ENCODE measurements at regions of chr12 and their contacts with region 1.

Region 1: DNA sequence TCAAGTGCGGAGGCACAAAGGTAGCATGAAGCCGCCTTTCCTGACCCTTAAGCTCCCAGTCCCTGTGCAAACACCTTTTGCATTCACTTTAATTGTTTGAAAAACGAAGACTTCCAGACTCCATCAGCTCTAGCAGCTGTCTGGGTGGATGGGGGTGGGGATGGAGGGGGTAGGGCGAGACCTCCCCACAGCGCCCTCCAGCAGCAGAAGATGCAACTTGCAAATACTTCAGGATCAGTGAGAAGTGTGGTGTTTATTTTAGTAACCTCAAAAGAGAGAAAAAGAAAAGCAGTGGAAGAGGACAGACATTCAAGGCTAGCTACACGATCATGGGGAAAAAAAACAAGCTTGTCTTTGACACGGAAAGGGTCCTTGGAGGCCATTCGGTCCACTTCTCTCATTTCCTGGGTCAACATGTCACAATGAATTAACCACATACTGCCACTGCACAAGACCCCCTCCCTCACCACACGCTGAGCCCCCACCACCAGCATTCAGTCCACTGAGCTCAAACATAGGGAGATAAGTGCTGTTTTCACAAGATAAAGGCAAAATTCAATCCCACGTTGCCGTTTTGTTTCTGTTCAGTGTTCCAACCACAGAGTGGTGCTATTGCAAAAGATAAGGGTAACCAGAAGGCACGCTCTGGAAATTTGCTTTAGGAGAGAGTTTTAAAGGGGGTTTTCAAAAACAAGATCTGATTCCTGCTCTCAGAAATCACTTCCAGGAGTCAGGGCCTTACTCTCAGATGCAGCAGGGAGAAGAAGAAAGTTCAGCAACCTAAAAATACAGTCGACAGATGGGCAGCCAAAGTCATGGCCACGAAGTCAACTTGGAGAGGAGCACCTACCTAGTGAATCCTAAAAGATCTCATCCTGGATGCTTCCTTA is 3.3 kb upstream of the NTF3 start:
- DNase-seq: no peak
- H3K4me3 ChIP-seq: no peak overlapping the region
- H3K27ac ChIP-seq: no peak overlapping the region
- H3K4me1 ChIP-seq: peaks cover 4% of the 10 kb centered on the region
- H3K27me3 ChIP-seq: peaks cover 7% of the 10 kb centered on the region
- CTCF ChIP-seq: peak in 3 of 4 experiments; percentile 16 to 58 (median 50)
- POLR2A ChIP-seq: no peak

Region 2: GRCh38 chr12:5171701-5172100 is 256.9 kb before region 1 on chr12:
- intact Hi-C with region 1: loop called (anchors 10 kb)
- DNase-seq: peak; percentile 34
- H3K4me3 ChIP-seq: no peak overlapping the region
- H3K27ac ChIP-seq: no peak overlapping the region
- H3K4me1 ChIP-seq: no peaks in the 10 kb centered on the region
- H3K27me3 ChIP-seq: no peaks in the 10 kb centered on the region
- CTCF ChIP-seq: peak; percentile 21 to 71 (median 54)
- POLR2A ChIP-seq: no peak

Region 3: DNA sequence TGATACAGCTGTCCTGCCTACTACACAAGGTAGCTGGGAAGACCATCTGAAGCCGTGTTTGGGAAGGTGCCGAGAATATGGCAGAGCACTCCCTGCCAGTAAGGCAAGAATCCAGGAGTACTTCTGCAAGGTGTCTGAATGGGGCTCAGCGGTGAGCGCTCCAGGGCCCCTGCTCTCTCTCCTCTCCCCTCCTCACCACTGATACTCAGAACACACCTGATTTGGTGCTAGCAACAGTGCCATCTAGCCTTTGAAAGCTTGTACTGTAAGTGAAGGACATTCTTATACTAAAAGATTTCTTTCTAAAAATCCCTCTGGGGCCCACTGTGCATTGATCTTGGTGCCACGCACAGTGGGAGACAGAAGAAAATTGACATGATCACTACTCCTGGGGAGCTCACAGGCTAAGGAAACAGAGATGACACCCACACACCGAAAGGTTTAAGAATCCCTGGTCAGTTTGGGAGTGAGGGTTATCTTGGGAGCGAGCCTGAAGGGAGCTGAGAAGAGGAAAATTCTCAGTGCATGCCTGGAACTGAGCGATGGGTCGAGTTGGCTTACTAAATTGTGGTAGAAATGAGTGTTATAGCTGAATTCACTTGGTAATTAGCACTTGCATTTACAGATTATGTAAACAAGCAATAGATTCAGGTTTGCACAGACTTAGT is 220.2 kb after region 1 on chr12:
- intact Hi-C with region 1: loop called (anchors 5 kb)
- DNase-seq: no peak
- H3K4me3 ChIP-seq: no peak overlapping the region
- H3K27ac ChIP-seq: no peak overlapping the region
- H3K4me1 ChIP-seq: no peaks in the 10 kb centered on the region
- H3K27me3 ChIP-seq: no peaks in the 10 kb centered on the region
- CTCF ChIP-seq: peak in 2 of 4 experiments; percentile 40 to 45
- POLR2A ChIP-seq: no peak

Region 4: GRCh38 chr12:5796171-5796958 is 367.8 kb after region 1 on chr12:
- intact Hi-C with region 1: loop called (anchors 5 kb)
- DNase-seq: no peak
- H3K4me3 ChIP-seq: no peak overlapping the region
- H3K27ac ChIP-seq: no peak overlapping the region
- H3K4me1 ChIP-seq: no peaks in the 10 kb centered on the region
- H3K27me3 ChIP-seq: no peaks in the 10 kb centered on the region
- CTCF ChIP-seq: peak; percentile 11 to 61 (median 40)
- POLR2A ChIP-seq: no peak

Region 5: DNA sequence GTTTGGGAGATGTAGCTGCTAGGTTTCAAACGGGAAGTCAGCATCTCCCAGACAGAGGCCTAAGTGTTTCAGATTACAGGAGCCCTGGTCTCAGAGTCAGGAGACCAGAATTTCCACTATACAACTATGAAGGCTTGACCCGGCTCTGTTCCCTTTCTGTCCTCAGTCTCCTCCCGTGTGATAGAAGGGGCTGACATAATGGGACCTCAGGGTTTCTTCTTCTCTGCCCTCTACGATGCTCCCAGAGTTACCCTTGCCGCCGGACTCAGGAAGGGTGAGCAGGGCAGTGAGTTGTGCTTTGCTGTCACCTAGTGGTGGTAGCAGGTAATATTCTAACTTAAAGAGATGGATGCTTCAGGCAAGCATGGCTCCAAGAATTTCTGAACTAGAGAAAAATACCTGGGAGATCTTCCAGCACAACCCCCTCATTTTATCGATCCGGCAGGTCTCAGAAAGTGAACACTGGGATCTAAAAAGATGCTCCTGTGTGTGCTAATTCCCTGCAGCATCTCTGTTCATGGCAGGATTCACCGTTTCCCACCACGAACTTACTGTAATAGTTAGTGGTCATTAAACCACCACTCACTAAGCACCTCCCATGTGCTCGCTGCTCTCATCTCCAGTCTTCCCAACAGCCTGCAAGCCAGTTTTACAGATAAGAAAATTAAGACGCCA is 611.5 kb after region 1 on chr12:
- intact Hi-C with region 1: loop called (anchors 5 kb)
- DNase-seq: peak; percentile 57
- H3K4me3 ChIP-seq: no peak overlapping the region
- H3K27ac ChIP-seq: no peak overlapping the region
- H3K4me1 ChIP-seq: no peaks in the 10 kb centered on the region
- H3K27me3 ChIP-seq: no peaks in the 10 kb centered on the region
- CTCF ChIP-seq: peak; percentile 81 to 93 (median 90)
- POLR2A ChIP-seq: no peak